CD14-positive monocyte (primary cell): ENCODE measurements at regions of chr1 and their contacts with region 1.

Region 1: DNA sequence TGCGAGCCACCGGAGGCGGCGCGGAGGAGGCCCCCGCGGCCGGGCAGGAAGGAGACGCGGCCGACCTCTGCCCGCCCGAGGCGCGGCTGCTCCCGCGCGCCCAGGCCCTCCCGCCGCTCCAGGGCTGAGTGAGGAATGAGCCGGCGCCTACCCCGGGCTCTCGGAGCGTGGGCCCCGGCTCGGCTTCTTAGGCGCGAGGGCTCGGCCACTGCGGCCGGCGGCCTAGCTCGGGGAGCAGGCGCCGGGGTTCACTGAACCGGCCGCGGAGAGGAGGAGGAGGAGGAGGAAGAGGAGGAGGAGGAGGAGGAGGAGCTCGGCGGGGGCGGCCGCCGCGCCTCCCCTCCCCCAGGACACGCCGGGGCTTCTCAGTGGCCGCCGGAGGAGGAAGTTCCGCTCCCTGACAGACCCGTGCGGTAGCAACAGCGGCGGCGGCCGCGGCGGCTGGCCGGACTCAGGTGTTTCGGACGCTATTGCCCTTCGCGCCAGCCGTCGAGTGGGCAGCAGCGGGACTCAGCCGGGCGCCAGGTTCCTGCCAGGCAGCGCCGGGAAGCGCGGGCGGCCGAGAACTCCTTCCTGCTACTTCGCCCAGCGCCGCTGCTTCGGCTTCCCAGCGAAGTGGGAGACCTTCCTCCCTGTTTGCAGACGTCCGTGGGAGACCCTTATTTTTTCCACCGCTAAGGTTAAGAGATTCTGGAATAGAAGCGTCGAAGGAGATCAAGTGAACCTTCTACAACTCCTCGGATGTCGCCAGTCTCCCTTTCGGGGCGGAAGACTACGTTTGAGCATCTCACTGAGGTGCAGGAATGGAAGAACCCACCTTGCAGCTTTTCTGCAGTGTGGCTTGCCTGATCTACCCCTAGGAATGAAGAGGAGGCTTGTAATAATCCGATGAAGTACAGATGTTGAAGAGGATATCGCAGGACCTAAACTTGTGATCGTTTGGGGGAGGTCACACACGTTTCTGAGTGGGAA is at the start of gene MAN1A2:
- DNase-seq: peak; percentile 69 to 82 (median 78)
- H3K4me3 ChIP-seq: peak within 1 kb of the TSS; percentile 79 to 90 (median 84)
- H3K4me3 Mint-ChIP-seq: peak within 1 kb of the TSS; percentile 96 to 98
- H3K27ac ChIP-seq: peak within 1 kb of the TSS; percentile 90 to 91
- H3K27ac Mint-ChIP-seq: peak within 1 kb of the TSS; percentile 89 to 97 (median 93)
- H3K4me1 ChIP-seq: peaks cover 33 to 44% of the 10 kb centered on the region in 2 donors
- H3K4me1 Mint-ChIP-seq: peaks cover 53% of the 10 kb centered on the region
- H3K27me3 ChIP-seq: no peaks in the 10 kb centered on the region
- H3K27me3 Mint-ChIP-seq: peaks cover 0 to 4% (median 0%) of the 10 kb centered on the region in 3 donors
- CTCF ChIP-seq: no peak
- polyA plus RNA-seq, gene MAN1A2: 4.0 to 10.5 (median 7.2) TPM

Region 2: DNA sequence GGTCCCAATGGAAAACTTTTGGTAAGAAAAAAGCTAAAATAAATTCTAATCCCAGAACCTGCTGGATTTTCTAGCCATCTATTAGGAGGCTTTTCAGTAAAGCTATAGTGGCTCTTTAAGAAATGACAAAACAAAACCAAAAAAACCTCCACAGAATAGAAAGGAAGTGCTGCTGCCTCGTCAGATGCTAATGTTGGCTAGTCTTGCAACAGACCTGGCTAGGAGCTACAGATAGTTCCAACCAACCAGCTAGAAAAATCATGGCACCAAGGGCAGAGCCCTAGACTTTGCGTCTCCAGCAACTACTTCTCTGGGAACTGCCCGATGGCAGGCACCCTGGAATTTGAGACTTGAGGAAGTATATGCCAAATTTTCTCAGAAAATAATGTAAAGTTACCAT is 358.2 kb before region 1 on chr1:
- intact Hi-C with region 1: no loop called
- DNase-seq: peak; percentile 73 to 87 (median 76)
- H3K4me3 ChIP-seq: peak overlapping the region in 1 of 3 experiments; percentile 50
- H3K4me3 Mint-ChIP-seq: peak overlapping the region in 1 of 2 donors; percentile 43
- H3K27ac ChIP-seq: peak overlapping the region; percentile 50 to 80
- H3K27ac Mint-ChIP-seq: peak overlapping the region; percentile 84 to 95 (median 90)
- H3K4me1 ChIP-seq: peaks cover 64 to 71% of the 10 kb centered on the region in 2 donors
- H3K4me1 Mint-ChIP-seq: peaks cover 59% of the 10 kb centered on the region
- H3K27me3 ChIP-seq: no peaks in the 10 kb centered on the region
- H3K27me3 Mint-ChIP-seq: peaks cover 0 to 1% (median 0%) of the 10 kb centered on the region in 3 donors
- CTCF ChIP-seq: no peak

Region 3: GRCh38 chr1:117121776-117122697 is 245.3 kb before region 1 on chr1:
- intact Hi-C with region 1: loop called in 1 of 2 experiments (anchors 5 kb)
- DNase-seq: peak; percentile 91 to 95 (median 93)
- H3K4me3 ChIP-seq: peak overlapping the region; percentile 44 to 79 (median 66)
- H3K4me3 Mint-ChIP-seq: peak overlapping the region; percentile 85 to 91
- H3K27ac ChIP-seq: peak overlapping the region; percentile 72 to 78
- H3K27ac Mint-ChIP-seq: peak overlapping the region; percentile 79 to 92 (median 90)
- H3K4me1 ChIP-seq: peaks cover 12 to 15% of the 10 kb centered on the region in 2 donors
- H3K4me1 Mint-ChIP-seq: peaks cover 19% of the 10 kb centered on the region
- H3K27me3 ChIP-seq: peaks cover 0 to 8% of the 10 kb centered on the region in 2 donors
- H3K27me3 Mint-ChIP-seq: peaks cover 0 to 15% (median 9%) of the 10 kb centered on the region in 3 donors
- CTCF ChIP-seq: peak; percentile 75

Region 4: GRCh38 chr1:117398957-117399356 is 31.6 kb after region 1 on chr1:
- intact Hi-C with region 1: no loop called
- DNase-seq: no peak
- H3K4me3 ChIP-seq: no peak overlapping the region
- H3K4me3 Mint-ChIP-seq: no peak overlapping the region
- H3K27ac ChIP-seq: no peak overlapping the region
- H3K27ac Mint-ChIP-seq: no peak overlapping the region
- H3K4me1 ChIP-seq: no peaks in the 10 kb centered on the region
- H3K4me1 Mint-ChIP-seq: peaks cover 4% of the 10 kb centered on the region
- H3K27me3 ChIP-seq: no peaks in the 10 kb centered on the region
- H3K27me3 Mint-ChIP-seq: no peaks in the 10 kb centered on the region
- CTCF ChIP-seq: no peak